ENCODE measurements at regions of chr17 and their contacts with region 1.

Region 1: GRCh38 chr17:6534846-6535514 is 21.4 kb downstream of the PITPNM3 start:
- DNase-seq: no peak
- ATAC-seq: peak in 1 of 2 experiments; percentile 33; a peak in 1 of 6 replicates
- H3K4me3 ChIP-seq: no peak overlapping the region
- H3K27ac ChIP-seq: no peak overlapping the region
- H3K4me1 ChIP-seq: no peaks in the 10 kb centered on the region
- CTCF ChIP-seq: no peak
- EP300 ChIP-seq: no peak
- POLR2A ChIP-seq: no peak
- RAD21 ChIP-seq: no peak

Region 2: GRCh38 chr17:6523330-6523729 is 11.7 kb before region 1 on chr17:
- CTCF ChIA-PET with region 1: interaction called, 15 read pairs
- POLR2A ChIA-PET with region 1: no interaction called
- DNase-seq: peak; percentile 68 to 74
- ATAC-seq: peak; percentile 75 to 78
- H3K4me3 ChIP-seq: 0 out of 3 replicates have a peak overlapping the region, but pooled peaks have one; percentile 10
- H3K27ac ChIP-seq: peak overlapping the region; percentile 69 to 89
- H3K4me1 ChIP-seq: peaks cover 27% of the 10 kb centered on the region
- CTCF ChIP-seq: no peak
- EP300 ChIP-seq: no peak; a peak in 1 of 5 replicates
- POLR2A ChIP-seq: no peak
- RAD21 ChIP-seq: peak in 1 of 2 experiments; percentile 18; a peak in 1 of 5 replicates

Measured in A549 (cell line).